ENCODE measurements at regions of chr11 and their contacts with region 1.

Region 1: DNA sequence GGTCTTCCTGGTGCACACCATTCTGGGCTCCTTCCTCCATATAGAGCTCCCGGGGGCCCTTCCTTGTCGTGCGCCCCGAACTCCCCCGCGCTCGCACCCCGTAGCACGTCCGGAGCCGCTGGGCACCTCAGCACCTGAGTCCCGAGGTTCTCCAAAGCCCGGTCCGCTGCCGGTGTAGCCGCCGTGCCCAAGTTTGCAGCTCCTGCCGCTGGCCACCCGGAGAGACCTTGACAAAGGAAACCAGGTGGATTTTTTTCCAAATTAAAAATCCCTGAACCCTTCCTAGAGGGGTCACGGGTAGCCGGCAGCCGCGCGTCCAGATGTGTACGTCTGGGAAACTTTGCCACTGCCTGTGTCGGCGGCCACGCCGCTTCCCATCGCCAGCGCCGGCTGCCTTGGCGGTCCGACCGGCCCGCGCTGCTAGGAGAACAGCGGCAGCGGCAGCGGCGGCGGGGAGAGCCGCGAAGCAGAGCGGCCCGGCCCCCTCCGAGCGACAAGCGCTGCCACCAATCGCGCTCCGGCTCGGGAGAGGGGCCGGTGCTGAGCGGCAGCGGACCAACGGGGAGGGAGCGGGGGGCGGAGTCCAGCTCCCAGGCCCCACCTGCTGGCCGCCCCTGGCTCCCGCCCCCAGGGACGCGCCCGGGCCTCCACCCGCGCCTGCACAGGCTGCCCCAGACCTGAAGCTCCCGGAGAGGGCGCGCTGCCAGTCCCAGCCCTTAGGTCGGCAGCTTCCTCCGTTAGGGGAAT is at the start of gene GALNT18:
- DNase-seq: peak; percentile 92
- ATAC-seq: peak; percentile 82
- H3K4me3 ChIP-seq: peak within 1 kb of the TSS; percentile 96
- H3K27ac ChIP-seq: no peak within 1 kb of the TSS
- H3K4me1 ChIP-seq: peaks cover 23% of the 10 kb centered on the region
- H3K27me3 ChIP-seq: no peaks in the 10 kb centered on the region
- CTCF ChIP-seq: peak; percentile 40; the same call in 1 of the 2 replicates
- total RNA-seq, gene GALNT18: 34.5 and 41.1 TPM in 2 replicates

Region 2: GRCh38 chr11:11311169-11311568 is 310.6 kb before region 1 on chr11:
- CTCF ChIA-PET with region 1: no interaction called
- POLR2A ChIA-PET with region 1: no interaction called
- intact Hi-C with region 1: no loop called
- DNase-seq: no peak
- ATAC-seq: no peak
- H3K4me3 ChIP-seq: no peak overlapping the region
- H3K27ac ChIP-seq: no peak overlapping the region
- H3K4me1 ChIP-seq: peaks cover 15% of the 10 kb centered on the region
- H3K27me3 ChIP-seq: no peaks in the 10 kb centered on the region
- CTCF ChIP-seq: no peak

Region 3: GRCh38 chr11:11374358-11375148 is 247.2 kb before region 1 on chr11:
- CTCF ChIA-PET with region 1: no interaction called
- POLR2A ChIA-PET with region 1: no interaction called
- intact Hi-C with region 1: no loop called
- DNase-seq: no peak
- ATAC-seq: no peak
- H3K4me3 ChIP-seq: no peak overlapping the region
- H3K27ac ChIP-seq: no peak overlapping the region
- H3K4me1 ChIP-seq: no peaks in the 10 kb centered on the region
- H3K27me3 ChIP-seq: no peaks in the 10 kb centered on the region
- CTCF ChIP-seq: no peak

Region 4: GRCh38 chr11:11502263-11502861 is 119.4 kb before region 1 on chr11:
- CTCF ChIA-PET with region 1: interaction called, 4 read pairs
- POLR2A ChIA-PET with region 1: no interaction called
- intact Hi-C with region 1: loop called (anchors 10 kb)
- DNase-seq: no peak
- ATAC-seq: no peak
- H3K4me3 ChIP-seq: no peak overlapping the region
- H3K27ac ChIP-seq: no peak overlapping the region
- H3K4me1 ChIP-seq: peaks cover 9% of the 10 kb centered on the region
- H3K27me3 ChIP-seq: no peaks in the 10 kb centered on the region
- CTCF ChIP-seq: no peak